HepG2 (cell line): ENCODE measurements at regions of chr1 and their contacts with region 1.

Region 1: DNA sequence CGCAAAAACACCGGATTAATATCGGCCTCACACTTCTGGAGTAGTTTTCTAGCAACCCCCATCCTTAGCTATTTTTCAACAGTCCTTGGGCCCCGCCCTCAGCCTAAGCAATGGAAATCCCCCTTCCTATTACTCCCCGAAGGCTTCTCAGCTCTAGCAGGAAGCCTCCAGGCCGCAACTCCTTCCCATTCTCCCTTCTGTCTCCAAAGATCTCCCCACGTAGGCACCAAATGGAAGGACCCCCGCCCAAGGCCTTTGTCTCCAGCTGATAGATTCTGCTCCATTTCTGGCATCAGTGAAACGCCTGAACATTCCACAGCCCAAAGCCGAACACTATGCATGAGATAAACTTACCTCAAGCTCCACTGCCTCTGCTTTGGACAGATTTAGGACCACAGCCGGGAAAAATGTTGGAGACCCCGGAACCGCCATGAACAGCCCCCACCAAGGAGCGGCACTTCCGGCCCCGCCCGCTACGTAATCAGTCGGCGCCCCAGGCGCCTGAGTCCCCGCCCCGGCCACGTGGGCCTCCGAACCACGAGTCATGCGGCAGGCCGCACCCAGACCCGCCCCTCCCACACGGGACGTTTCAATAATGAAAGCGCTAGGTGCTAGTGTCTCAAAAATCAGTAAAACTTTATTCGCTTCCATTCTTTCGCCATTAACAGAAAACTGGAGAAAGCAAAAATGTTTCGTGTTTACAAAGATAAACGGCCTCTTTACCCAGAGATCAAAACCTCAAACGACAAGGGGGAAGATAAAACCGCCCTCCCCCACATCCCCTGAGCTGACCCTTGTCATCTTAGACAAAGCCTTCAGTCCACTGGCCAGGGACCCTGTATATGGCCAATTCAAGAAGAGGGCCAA is at the start of gene NRAS:
- DNase-seq: peak; percentile 81
- ATAC-seq: peak; percentile 93
- H3K4me3 ChIP-seq: peak within 1 kb of the TSS; percentile 86 to 100 (median 94)
- H3K27ac ChIP-seq: peak within 1 kb of the TSS; percentile 85
- H3K4me1 ChIP-seq: peaks cover 29% of the 10 kb centered on the region
- H3K27me3 ChIP-seq: no peaks in the 10 kb centered on the region; a peak in 1 of 5 replicates
- CTCF ChIP-seq: no peak
- EP300 ChIP-seq: peak in 1 of 2 experiments; percentile 54; a peak in 1 of 4 replicates
- POLR2A ChIP-seq: peak; percentile 69 to 71
- RAD21 ChIP-seq: peak; percentile 21; the same call in 1 of the 2 replicates
- total RNA-seq, gene NRAS: 58.8 and 96.2 TPM in 2 replicates

Region 2: GRCh38 chr1:114750780-114751179 is 34.2 kb after region 1 on chr1:
- CTCF ChIA-PET with region 1: no interaction called
- POLR2A ChIA-PET with region 1: interaction called, 4 read pairs
- in situ Hi-C with region 1: loop called (anchors 5 kb)
- intact Hi-C with region 1: loop called (anchors 5 kb)
- DNase-seq: no peak
- ATAC-seq: no peak
- H3K4me3 ChIP-seq: no peak overlapping the region
- H3K27ac ChIP-seq: no peak overlapping the region
- H3K4me1 ChIP-seq: peaks cover 43% of the 10 kb centered on the region
- H3K27me3 ChIP-seq: no peaks in the 10 kb centered on the region
- CTCF ChIP-seq: no peak
- EP300 ChIP-seq: no peak
- POLR2A ChIP-seq: no peak
- RAD21 ChIP-seq: no peak

Region 3: DNA sequence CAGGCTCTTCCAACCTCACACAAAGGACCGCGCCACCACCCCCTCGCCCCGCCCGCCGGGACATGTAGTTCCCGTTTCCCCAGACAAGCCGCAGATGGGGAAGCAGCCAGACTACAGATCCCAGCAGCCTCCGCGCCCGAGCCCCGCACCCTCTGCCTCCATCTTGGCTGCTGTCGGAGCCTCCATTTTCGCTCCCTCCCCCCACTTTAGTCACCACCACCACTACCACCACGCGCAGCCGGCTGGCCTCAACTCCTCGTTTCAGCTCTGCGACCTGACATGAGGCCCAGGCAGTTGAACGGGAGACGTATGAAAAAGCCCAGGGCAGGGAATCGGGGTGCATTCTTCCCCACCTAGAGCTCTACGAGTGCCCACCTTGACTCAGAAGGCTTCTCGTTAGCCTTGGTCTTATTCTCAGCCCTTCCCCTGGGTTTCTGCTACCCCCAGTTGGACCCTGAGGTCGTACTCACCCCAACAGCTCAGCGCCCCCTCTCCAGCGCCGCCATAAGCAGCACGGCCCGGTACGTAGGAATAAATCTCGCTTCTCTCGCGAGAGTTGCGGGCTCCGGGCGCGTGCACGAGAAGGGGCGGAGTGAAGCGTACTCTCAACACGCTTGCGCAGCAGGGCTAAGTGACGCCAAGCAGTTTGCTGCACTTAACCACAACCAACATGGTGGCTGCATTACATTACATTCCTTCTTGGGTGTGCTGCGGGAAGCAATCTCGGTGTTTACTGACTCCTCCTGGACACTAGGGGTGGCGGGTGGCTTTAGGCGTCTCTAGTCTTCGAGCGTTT is 41.1 kb after region 1 on chr1 and contains the start of gene CSDE1:
- CTCF ChIA-PET with region 1: no interaction called
- POLR2A ChIA-PET with region 1: interaction called, 4 read pairs
- in situ Hi-C with region 1: loop called (anchors 5 kb)
- intact Hi-C with region 1: loop called (anchors 5 kb)
- DNase-seq: peak; percentile 98
- ATAC-seq: peak; percentile 95
- H3K4me3 ChIP-seq: peak within 1 kb of the TSS; percentile 85 to 100 (median 99)
- H3K27ac ChIP-seq: peak within 1 kb of the TSS; percentile 98
- H3K4me1 ChIP-seq: peaks cover 44% of the 10 kb centered on the region
- H3K27me3 ChIP-seq: no peaks in the 10 kb centered on the region; a peak in 1 of 5 replicates
- CTCF ChIP-seq: peak; percentile 66
- EP300 ChIP-seq: peak in 1 of 2 experiments; percentile 17; a peak in 1 of 4 replicates
- POLR2A ChIP-seq: peak; percentile 85 to 97
- RAD21 ChIP-seq: peak; percentile 6; the same call in 1 of the 2 replicates
- total RNA-seq, gene CSDE1: 313 and 582 TPM in 2 replicates

Region 4: DNA sequence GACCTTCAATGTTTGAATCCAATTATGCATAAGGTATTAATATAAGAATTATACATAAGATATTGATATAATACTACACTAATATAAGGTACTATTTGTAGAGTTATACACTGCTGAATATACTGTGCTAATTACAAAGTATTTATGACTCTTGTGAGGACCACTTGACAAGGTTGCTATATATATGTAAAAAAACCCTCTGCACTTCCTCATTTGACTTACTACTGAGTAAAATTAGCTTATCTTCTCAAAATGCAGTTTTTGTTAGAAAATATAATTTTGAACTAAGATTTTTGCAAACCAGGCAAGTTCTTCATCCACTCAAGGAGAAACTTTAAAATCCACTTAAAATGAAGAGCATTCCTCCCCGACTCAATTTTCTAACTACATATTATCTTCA is 55.5 kb after region 1 on chr1:
- CTCF ChIA-PET with region 1: no interaction called
- POLR2A ChIA-PET with region 1: no interaction called
- in situ Hi-C with region 1: no loop called
- intact Hi-C with region 1: no loop called
- DNase-seq: no peak
- ATAC-seq: no peak
- H3K4me3 ChIP-seq: no peak overlapping the region
- H3K27ac ChIP-seq: no peak overlapping the region
- H3K4me1 ChIP-seq: peaks cover 12% of the 10 kb centered on the region
- H3K27me3 ChIP-seq: no peaks in the 10 kb centered on the region
- CTCF ChIP-seq: no peak
- EP300 ChIP-seq: no peak
- POLR2A ChIP-seq: no peak
- RAD21 ChIP-seq: no peak